ENCODE measurements at regions of chr10 and their contacts with region 1.

Region 1: DNA sequence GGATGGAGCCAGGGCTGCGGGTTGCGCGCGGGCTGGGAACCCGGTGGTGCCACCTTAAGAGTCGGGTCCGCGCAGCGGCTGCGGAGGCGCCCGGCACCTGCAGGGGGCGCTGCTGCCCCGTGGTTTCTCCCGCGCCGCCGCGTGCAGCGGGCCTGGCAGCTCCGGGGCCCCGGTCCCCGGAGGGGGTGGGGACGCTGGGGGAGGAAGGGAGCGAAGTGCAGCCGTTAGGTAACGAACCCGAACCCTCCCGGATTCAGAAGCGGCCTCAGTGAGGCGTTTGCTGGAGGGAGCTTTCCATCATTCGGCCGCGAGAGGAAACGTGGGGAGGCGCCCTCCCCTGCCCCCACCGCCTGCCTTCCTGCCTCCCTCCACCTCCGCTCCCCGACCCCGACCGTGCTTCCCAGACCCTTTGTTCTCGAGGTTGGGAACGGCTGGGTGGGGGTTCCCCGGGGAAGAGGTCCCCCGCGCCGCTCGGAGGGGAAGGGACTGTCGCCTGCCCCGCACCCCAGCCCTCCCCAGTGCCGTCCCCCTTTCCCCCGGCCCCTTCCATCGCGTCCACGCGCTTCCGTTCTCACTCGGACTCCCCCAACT is 29.6 kb downstream of the SKIDA1 start:
- DNase-seq: peak; percentile 82
- H3K4me3 ChIP-seq: peak overlapping the region; percentile 68
- H3K27ac ChIP-seq: no peak overlapping the region
- H3K4me1 ChIP-seq: peaks cover 6% of the 10 kb centered on the region
- H3K27me3 ChIP-seq: peaks cover 48% of the 10 kb centered on the region
- CTCF ChIP-seq: peak; percentile 95

Region 2: DNA sequence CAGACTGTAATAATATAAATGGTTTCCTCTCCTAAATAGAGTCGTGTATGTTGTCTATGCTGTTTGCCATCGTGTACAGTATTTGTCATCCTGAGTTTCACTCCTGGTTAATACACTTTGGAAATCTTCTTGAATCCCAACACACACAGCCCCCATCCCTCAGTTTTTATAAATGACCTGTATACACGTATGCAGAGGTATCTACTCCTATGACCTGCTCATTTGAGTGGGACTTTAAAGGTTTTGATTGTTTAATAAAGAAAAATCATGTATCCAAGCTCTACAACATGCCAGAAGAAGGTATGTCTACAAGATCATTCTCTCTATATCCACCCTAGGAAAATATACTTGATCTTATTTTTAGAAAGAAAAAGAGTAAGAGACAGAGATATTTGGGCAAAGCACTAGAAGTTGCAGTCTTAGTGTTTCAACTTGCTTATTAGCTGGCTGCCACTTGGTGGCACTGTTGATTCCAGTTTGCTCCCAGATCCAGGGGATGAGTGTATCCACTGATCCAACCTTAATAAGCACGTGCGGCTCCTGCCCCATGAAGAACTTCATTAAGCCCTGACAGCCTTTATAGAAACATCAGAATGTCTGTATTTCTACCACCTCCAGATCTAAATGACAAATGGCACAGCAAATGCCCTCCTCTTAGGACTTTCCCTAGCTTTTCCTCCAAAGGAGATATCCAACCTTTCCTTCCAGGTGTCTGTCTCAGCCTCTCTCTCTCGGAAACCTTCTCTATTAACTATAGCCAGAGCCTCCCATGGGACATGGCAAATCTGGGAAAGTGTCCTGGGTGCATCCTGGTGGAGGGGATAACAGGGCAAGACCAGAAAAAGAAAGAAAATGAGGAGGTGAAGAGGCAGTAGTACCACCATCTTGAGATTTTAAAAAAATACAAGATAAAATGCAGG is 417.2 kb before region 1 on chr10:
- intact Hi-C with region 1: loop called (anchors 5 kb)
- DNase-seq: peak; percentile 65
- H3K4me3 ChIP-seq: no peak overlapping the region
- H3K27ac ChIP-seq: no peak overlapping the region
- H3K4me1 ChIP-seq: no peaks in the 10 kb centered on the region
- H3K27me3 ChIP-seq: no peaks in the 10 kb centered on the region
- CTCF ChIP-seq: peak; percentile 58

Region 3: DNA sequence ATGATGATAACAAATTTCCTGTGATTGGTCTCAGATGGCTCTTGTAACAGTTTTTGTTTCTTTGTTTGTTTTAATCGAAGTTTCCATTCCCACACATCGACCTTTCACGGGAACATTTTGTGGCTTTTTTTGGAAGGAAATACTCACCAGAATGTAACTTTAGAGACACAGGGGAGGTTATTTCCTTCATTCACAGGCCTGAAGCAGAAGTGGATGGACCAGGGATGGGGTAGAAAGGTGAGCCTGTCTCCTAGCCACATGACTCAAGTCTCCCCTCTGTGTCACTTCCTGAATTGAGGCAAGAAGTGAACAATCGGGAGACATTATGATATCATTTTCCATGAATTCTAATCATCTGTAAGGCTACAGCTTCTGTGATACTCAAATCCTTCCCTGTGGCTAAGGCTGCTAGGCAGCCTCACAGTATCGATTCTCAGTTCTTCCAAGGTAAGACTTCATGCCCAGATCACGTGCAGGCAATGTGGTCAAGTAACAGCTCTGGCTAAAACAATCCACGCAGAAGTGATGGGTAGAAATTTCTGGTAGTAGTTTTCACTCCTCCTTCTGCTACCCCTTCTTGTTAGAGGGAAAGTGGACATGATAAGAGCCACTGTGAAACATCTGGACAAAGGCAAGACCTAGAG is 394.9 kb before region 1 on chr10:
- intact Hi-C with region 1: no loop called
- DNase-seq: no peak
- H3K4me3 ChIP-seq: no peak overlapping the region
- H3K27ac ChIP-seq: no peak overlapping the region
- H3K4me1 ChIP-seq: no peaks in the 10 kb centered on the region
- H3K27me3 ChIP-seq: no peaks in the 10 kb centered on the region
- CTCF ChIP-seq: no peak

Region 4: DNA sequence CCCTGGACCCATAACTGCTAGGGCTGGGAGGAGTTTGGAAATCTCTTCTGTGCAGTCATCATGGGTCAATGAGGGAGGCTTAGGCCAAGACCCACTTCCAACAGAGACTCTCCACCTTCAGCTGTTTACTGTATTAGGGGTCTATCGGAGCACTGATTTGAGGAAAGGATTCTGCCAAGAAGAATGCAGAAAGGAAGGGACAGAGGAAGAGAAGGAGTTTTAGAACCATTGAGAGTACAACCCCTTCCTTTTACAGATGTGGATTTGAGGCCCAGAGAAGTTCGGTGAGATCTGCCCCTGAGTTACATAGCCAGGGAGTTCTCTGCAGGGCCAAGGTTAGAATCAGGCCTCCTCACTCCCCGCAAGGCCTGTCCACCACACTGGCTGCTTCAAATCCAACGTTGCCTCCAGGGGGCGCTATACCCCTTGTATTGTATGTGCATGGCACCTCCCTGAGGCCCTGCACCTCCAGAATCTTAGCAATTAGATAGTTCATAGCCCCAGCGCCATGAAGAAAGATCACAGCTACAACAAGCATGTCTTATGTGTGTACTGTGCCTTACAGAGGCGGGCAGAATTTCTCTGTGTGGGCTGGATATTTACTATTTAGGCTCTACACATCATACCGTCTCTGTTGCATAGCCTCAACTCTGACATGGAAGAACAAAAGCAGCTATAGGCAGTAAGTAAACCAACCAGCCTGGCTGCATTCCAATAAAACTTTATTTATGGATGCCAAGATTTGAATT is 217.2 kb before region 1 on chr10:
- intact Hi-C with region 1: loop called (anchors 10 kb)
- DNase-seq: peak; percentile 93
- H3K4me3 ChIP-seq: no peak overlapping the region
- H3K27ac ChIP-seq: no peak overlapping the region
- H3K4me1 ChIP-seq: no peaks in the 10 kb centered on the region
- H3K27me3 ChIP-seq: no peaks in the 10 kb centered on the region
- CTCF ChIP-seq: peak; percentile 66

Region 5: GRCh38 chr10:21304203-21304602 is 191.6 kb before region 1 on chr10:
- intact Hi-C with region 1: no loop called
- DNase-seq: no peak
- H3K4me3 ChIP-seq: no peak overlapping the region
- H3K27ac ChIP-seq: no peak overlapping the region
- H3K4me1 ChIP-seq: no peaks in the 10 kb centered on the region
- H3K27me3 ChIP-seq: no peaks in the 10 kb centered on the region
- CTCF ChIP-seq: no peak

Region 6: GRCh38 chr10:21732067-21732772 is 236.4 kb after region 1 on chr10:
- intact Hi-C with region 1: loop called (anchors 5 kb)
- DNase-seq: no peak
- H3K4me3 ChIP-seq: no peak overlapping the region
- H3K27ac ChIP-seq: no peak overlapping the region
- H3K4me1 ChIP-seq: no peaks in the 10 kb centered on the region
- H3K27me3 ChIP-seq: no peaks in the 10 kb centered on the region
- CTCF ChIP-seq: peak; percentile 65

Region 7: DNA sequence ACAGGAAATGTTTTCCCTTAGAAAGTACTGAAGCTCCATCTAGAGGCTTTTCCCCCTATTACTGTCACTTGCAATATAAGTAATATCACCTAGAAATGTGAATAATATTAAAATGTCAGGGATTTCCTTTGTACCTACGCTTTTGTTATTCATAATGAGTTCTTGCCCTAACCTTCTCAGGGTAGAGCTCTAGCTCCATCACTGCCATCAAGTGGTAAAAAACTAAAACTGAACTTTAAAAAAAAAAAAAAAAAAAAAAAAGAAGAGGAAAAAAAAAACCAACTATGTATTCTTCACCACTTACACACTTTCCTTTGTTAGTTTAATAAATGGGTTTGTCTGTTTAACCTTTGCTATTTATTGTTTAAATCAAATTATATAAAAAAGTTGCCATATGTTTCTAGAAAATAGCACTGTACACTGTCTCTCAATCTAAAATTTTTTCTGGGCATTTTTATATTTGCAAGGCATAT is 457.8 kb after region 1 on chr10:
- intact Hi-C with region 1: loop called (anchors 5 kb)
- DNase-seq: no peak
- H3K4me3 ChIP-seq: no peak overlapping the region
- H3K27ac ChIP-seq: no peak overlapping the region
- H3K4me1 ChIP-seq: no peaks in the 10 kb centered on the region
- H3K27me3 ChIP-seq: no peaks in the 10 kb centered on the region
- CTCF ChIP-seq: peak; percentile 28

Region 8: DNA sequence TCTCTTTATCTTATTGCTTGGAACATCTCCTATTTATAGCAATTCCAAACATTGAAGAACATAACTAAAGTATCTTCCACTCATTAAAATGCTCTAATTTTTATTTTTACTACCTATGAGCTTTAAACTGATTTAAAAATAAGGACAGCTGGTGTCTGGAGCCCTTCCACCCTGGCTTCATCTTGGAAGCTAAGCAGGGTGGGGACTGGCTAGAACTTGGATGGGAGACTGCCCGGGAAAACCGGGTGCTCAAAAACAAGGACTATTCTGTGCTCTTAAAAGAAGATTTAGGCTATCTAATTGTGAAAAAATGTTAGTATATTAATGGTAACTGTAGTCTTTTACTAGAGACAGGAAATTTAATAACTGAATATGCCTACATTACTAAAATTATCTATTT is 1501.3 kb after region 1 on chr10:
- intact Hi-C with region 1: loop called (anchors 10 kb)
- DNase-seq: no peak
- H3K4me3 ChIP-seq: no peak overlapping the region
- H3K27ac ChIP-seq: no peak overlapping the region
- H3K4me1 ChIP-seq: no peaks in the 10 kb centered on the region
- H3K27me3 ChIP-seq: no peaks in the 10 kb centered on the region
- CTCF ChIP-seq: no peak